HepG2 (cell line): ENCODE measurements at regions of chr2 and their contacts with region 1.

Region 1: DNA sequence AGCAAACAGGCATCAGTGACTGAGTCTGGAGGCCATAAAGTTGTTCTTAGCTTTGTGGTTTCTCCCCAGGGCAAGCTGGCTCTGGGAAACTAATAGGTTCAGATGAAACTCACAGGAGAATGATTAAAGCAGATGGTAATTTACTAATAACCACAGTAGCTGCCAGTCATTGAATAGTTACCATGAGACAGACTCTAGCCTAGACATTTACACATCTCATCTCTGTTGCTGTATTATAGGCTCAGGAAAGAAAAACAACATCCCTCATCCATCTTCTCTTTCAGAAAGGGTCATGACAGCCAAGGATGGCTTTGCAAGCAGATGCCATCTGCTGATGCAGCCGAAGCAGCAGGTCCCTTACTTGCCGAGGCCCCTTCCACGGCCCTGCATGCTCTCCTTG is 314.0 kb upstream of the ID2 start:
- DNase-seq: no peak
- ATAC-seq: no peak
- H3K4me3 ChIP-seq: no peak overlapping the region
- H3K27ac ChIP-seq: no peak overlapping the region
- H3K4me1 ChIP-seq: peaks cover 23% of the 10 kb centered on the region
- H3K27me3 ChIP-seq: peaks cover 0 to 9% of the 10 kb centered on the region in 2 experiments; a peak in 1 of 5 replicates
- CTCF ChIP-seq: no peak
- EP300 ChIP-seq: no peak
- POLR2A ChIP-seq: no peak
- RAD21 ChIP-seq: no peak

Region 2: DNA sequence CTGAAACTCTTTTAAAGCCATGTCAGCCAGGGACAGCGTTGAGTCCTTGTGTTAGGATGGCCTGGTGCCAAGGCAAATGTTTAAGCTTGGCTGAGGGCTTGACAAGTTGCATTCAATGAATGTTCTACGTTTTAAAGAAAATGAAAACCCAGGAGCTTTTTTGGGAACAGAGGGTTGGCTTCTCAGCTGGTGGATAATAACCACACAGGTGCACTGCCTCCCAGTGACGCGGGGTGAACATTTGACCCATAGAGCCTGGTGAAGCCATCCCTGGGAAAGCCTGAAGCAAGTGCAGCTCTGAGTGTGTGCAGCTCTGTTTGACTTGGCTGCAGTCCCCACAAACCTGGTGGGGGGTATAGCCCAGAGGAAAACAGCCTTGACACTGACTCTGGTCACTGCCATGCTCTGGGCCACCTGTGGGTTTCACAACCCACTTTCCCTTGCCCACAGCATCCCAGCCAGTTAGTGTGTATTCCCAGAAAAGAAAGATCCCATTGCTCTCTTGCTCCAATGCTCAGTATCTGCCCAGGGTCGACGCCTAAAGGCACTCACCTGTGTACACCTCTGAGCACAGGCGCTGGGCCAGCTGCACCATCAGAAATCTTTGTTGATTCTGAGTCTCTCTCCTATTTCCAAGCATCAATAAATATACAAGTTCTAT is 575.7 kb before region 1 on chr2:
- CTCF ChIA-PET with region 1: no interaction called
- POLR2A ChIA-PET with region 1: no interaction called
- in situ Hi-C with region 1: no loop called
- intact Hi-C with region 1: loop called (anchors 2 kb)
- DNase-seq: peak; percentile 18
- ATAC-seq: peak; percentile 76
- H3K4me3 ChIP-seq: no peak overlapping the region
- H3K27ac ChIP-seq: no peak overlapping the region
- H3K4me1 ChIP-seq: no peaks in the 10 kb centered on the region
- H3K27me3 ChIP-seq: no peaks in the 10 kb centered on the region; a peak in 1 of 5 replicates
- CTCF ChIP-seq: no peak
- EP300 ChIP-seq: no peak
- POLR2A ChIP-seq: no peak
- RAD21 ChIP-seq: no peak

Region 3: DNA sequence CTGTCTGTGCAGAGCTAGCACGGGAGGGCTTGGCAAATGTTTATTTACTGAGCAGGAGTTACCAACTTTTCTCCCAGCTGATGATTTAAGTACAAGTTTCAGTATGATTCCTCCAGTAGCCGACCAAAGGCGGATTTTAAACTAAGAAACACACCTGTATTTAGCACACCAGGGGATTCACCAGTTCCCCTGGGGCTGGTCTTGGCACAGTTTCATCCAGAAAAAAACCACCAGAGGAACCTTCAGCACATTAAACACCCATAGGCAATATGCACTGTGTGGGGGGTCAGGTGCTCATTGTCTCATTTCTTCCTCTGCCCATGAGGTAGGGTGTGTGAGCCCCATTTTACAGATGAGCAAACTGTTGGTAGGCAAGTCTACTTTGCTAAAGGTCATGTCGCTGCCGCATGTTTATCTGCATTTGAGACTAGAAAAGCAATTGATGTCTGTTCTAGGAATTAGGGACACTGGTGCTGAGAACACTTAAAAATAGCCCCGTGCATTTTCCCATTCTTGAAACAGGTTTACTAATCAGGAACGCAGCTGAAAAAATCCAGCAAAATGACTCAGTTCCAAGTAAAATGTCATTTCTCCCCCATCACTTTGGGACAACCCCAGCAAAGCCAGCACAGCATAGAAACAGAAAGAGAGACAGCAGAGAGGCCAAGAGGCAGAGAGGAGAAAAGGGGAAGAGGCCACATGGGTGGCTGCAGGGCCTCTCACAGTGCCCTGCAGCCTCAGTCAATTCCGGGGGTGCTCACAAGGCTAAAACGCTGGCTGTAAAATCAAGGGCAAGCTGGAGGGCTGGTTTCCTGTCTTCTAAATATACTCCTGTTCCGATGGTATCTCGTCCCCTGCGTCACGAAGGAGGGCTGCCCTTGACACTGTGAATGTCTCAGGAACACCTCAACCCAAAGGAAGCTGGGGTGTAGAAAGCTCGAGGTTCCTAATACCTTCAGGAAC is 147.2 kb after region 1 on chr2:
- CTCF ChIA-PET with region 1: no interaction called
- POLR2A ChIA-PET with region 1: no interaction called
- in situ Hi-C with region 1: no loop called
- intact Hi-C with region 1: no loop called
- DNase-seq: no peak
- ATAC-seq: no peak
- H3K4me3 ChIP-seq: no peak overlapping the region
- H3K27ac ChIP-seq: no peak overlapping the region
- H3K4me1 ChIP-seq: no peaks in the 10 kb centered on the region
- H3K27me3 ChIP-seq: peaks cover 5 to 49% of the 10 kb centered on the region in 2 experiments; a peak in 3 of 5 replicates
- CTCF ChIP-seq: no peak
- EP300 ChIP-seq: no peak
- POLR2A ChIP-seq: no peak
- RAD21 ChIP-seq: no peak